B cell (primary cell): ENCODE measurements at regions of chr18 and their contacts with region 1.

Region 1: GRCh38 chr18:11937874-11938478 is 29.9 kb upstream of the MPPE1 start:
- DNase-seq: peak; percentile 82
- ATAC-seq: peak; percentile 64
- H3K4me3 ChIP-seq: no peak overlapping the region
- H3K4me3 Mint-ChIP-seq: no peak overlapping the region
- H3K27ac ChIP-seq: no peak overlapping the region
- H3K27ac Mint-ChIP-seq: no peak overlapping the region
- H3K4me1 ChIP-seq: no peaks in the 10 kb centered on the region
- H3K4me1 Mint-ChIP-seq: no peaks in the 10 kb centered on the region
- H3K27me3 ChIP-seq: no peaks in the 10 kb centered on the region
- H3K27me3 Mint-ChIP-seq: no peaks in the 10 kb centered on the region
- CTCF ChIP-seq: peak; percentile 86

Region 2: DNA sequence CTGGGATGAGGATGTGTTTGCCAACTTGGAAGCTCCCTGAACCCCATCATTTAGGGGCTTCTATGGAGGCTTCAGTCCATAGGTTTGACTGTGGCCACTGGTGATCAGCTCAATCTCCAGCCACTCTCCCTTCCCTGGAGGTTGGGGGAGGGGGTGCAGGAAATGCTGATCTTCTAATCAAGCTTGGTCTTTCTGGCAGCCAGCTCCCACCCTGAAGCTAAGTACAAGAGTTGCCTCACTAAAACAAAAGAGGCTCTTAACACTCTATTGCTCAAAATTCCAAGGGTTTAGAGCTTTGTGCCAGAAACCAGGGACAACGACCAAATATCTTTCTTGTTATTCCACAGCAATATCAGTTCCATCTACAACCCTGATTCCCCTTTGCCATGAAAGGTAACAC is 10.5 kb before region 1 on chr18:
- CTCF ChIA-PET with region 1: interaction called, 18 read pairs
- POLR2A ChIA-PET with region 1: interaction called, 4 read pairs
- intact Hi-C with region 1: no loop called
- DNase-seq: no peak
- ATAC-seq: no peak
- H3K4me3 ChIP-seq: no peak overlapping the region
- H3K4me3 Mint-ChIP-seq: no peak overlapping the region
- H3K27ac ChIP-seq: no peak overlapping the region
- H3K27ac Mint-ChIP-seq: no peak overlapping the region
- H3K4me1 ChIP-seq: no peaks in the 10 kb centered on the region
- H3K4me1 Mint-ChIP-seq: no peaks in the 10 kb centered on the region
- H3K27me3 ChIP-seq: no peaks in the 10 kb centered on the region
- H3K27me3 Mint-ChIP-seq: peaks cover 2% of the 10 kb centered on the region
- CTCF ChIP-seq: no peak

Region 3: GRCh38 chr18:11989973-11990380 is 52.0 kb after region 1 on chr18:
- CTCF ChIA-PET with region 1: interaction called, 390 read pairs
- POLR2A ChIA-PET with region 1: no interaction called
- intact Hi-C with region 1: loop called (anchors 1 kb)
- DNase-seq: no peak
- ATAC-seq: no peak
- H3K4me3 ChIP-seq: no peak overlapping the region
- H3K4me3 Mint-ChIP-seq: no peak overlapping the region
- H3K27ac ChIP-seq: no peak overlapping the region
- H3K27ac Mint-ChIP-seq: no peak overlapping the region
- H3K4me1 ChIP-seq: no peaks in the 10 kb centered on the region
- H3K4me1 Mint-ChIP-seq: no peaks in the 10 kb centered on the region
- H3K27me3 ChIP-seq: no peaks in the 10 kb centered on the region
- H3K27me3 Mint-ChIP-seq: no peaks in the 10 kb centered on the region
- CTCF ChIP-seq: no peak

Region 4: GRCh38 chr18:12011957-12012549 is 74.1 kb after region 1 on chr18:
- CTCF ChIA-PET with region 1: interaction called, 10 read pairs
- POLR2A ChIA-PET with region 1: no interaction called
- intact Hi-C with region 1: no loop called
- DNase-seq: no peak
- ATAC-seq: no peak
- H3K4me3 ChIP-seq: no peak overlapping the region
- H3K4me3 Mint-ChIP-seq: no peak overlapping the region
- H3K27ac ChIP-seq: no peak overlapping the region
- H3K27ac Mint-ChIP-seq: no peak overlapping the region
- H3K4me1 ChIP-seq: no peaks in the 10 kb centered on the region
- H3K4me1 Mint-ChIP-seq: no peaks in the 10 kb centered on the region
- H3K27me3 ChIP-seq: no peaks in the 10 kb centered on the region
- H3K27me3 Mint-ChIP-seq: no peaks in the 10 kb centered on the region
- CTCF ChIP-seq: no peak

Region 5: DNA sequence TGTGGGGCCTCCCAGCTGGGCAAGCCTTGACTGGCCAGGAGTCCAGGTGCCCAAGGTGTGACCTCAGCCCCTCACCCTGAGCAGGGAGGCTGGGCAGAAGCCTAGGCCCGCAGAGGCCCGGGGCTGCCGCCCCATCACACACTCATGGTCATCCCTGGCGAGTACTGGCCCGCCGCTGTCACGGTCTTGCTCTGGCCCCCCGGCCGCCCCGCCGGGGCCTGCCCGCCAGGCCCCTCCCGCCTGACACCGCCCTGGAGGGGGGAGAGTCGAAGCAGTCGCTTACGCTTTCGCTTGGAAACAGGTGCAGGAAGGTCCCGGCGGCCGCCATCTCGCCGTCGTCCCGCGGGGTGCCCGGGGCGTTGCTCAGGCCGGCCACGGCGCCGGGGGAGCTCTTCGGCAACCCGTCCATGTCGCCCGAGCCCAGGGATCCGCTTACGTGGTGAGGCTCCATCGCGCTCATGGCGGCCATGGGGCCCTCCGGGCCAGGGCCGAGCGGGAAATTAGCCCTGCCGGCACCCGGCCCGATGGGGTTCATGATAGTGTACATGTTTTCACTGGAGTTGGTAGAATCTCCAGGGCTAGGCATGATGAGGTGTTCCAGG is 129.0 kb after region 1 on chr18:
- CTCF ChIA-PET with region 1: no interaction called
- POLR2A ChIA-PET with region 1: no interaction called
- intact Hi-C with region 1: no loop called
- DNase-seq: no peak
- ATAC-seq: peak; percentile 14
- H3K4me3 ChIP-seq: no peak overlapping the region
- H3K4me3 Mint-ChIP-seq: no peak overlapping the region
- H3K27ac ChIP-seq: no peak overlapping the region
- H3K27ac Mint-ChIP-seq: no peak overlapping the region
- H3K4me1 ChIP-seq: no peaks in the 10 kb centered on the region
- H3K4me1 Mint-ChIP-seq: no peaks in the 10 kb centered on the region
- H3K27me3 ChIP-seq: no peaks in the 10 kb centered on the region
- H3K27me3 Mint-ChIP-seq: peaks cover 2% of the 10 kb centered on the region
- CTCF ChIP-seq: no peak

Region 6: GRCh38 chr18:12236934-12237832 is 299.2 kb after region 1 on chr18:
- CTCF ChIA-PET with region 1: interaction called, 14 read pairs
- POLR2A ChIA-PET with region 1: no interaction called
- intact Hi-C with region 1: no loop called
- DNase-seq: peak; percentile 70
- ATAC-seq: peak; percentile 92
- H3K4me3 ChIP-seq: no peak overlapping the region
- H3K4me3 Mint-ChIP-seq: no peak overlapping the region
- H3K27ac ChIP-seq: no peak overlapping the region
- H3K27ac Mint-ChIP-seq: no peak overlapping the region
- H3K4me1 ChIP-seq: peaks cover 3 to 4% of the 10 kb centered on the region in 2 donors
- H3K4me1 Mint-ChIP-seq: peaks cover 2% of the 10 kb centered on the region
- H3K27me3 ChIP-seq: peaks cover 0 to 10% (median 2%) of the 10 kb centered on the region in 4 experiments
- H3K27me3 Mint-ChIP-seq: peaks cover 28% of the 10 kb centered on the region
- CTCF ChIP-seq: peak; percentile 92

Region 7: DNA sequence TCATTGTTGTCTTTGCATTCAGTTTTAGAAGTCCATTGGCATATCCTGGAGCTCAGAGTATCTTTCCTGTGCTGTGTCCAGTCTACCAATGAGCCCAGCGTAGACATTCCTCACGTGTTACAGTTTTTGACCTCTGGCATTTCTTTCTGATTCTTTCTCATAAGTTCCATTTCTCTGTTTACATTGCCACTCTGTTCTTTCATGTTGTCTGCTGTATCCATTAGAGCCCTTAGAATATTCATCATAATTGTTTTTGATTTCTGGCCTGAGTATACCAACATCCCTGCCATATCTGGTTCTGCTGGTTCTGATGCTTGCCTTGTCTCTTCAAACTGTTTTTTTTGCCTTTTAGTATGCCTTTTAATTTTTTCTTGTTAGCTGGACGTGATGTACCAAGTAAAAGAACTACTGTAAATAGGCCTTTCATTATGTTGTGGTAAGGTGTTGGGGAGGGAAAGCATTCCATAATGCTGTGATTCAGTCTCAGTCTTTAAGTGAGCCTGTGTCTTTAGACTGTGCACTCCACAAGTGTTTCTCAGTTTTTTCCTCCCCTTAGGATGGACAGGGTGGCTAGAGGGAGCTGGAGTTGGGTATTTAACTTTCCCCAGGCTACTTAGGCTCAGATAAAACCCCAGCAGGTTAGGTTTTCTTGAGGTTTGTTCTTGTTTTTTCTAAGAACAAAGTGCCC is 1088.8 kb after region 1 on chr18:
- CTCF ChIA-PET with region 1: no interaction called
- POLR2A ChIA-PET with region 1: no interaction called
- intact Hi-C with region 1: no loop called
- DNase-seq: no peak
- ATAC-seq: no peak
- H3K4me3 ChIP-seq: no peak overlapping the region
- H3K4me3 Mint-ChIP-seq: no peak overlapping the region
- H3K27ac ChIP-seq: no peak overlapping the region
- H3K27ac Mint-ChIP-seq: no peak overlapping the region
- H3K4me1 ChIP-seq: no peaks in the 10 kb centered on the region
- H3K4me1 Mint-ChIP-seq: peaks cover 3% of the 10 kb centered on the region
- H3K27me3 ChIP-seq: no peaks in the 10 kb centered on the region
- H3K27me3 Mint-ChIP-seq: no peaks in the 10 kb centered on the region
- CTCF ChIP-seq: no peak